ENCODE measurements at regions of chr11 and their contacts with region 1.

Region 1: GRCh38 chr11:8006349-8006977 is 19.3 kb downstream of the EIF3F start:
- DNase-seq: peak; percentile 82
- H3K4me3 ChIP-seq: no peak overlapping the region
- H3K27ac ChIP-seq: no peak overlapping the region
- H3K4me1 ChIP-seq: no peaks in the 10 kb centered on the region
- H3K27me3 ChIP-seq: no peaks in the 10 kb centered on the region
- CTCF ChIP-seq: peak; percentile 73 to 89 (median 83)
- EP300 ChIP-seq: no peak
- POLR2A ChIP-seq: no peak

Region 2: GRCh38 chr11:7840580-7840979 is 165.9 kb before region 1 on chr11:
- intact Hi-C with region 1: no loop called
- DNase-seq: no peak
- H3K4me3 ChIP-seq: no peak overlapping the region
- H3K27ac ChIP-seq: no peak overlapping the region
- H3K4me1 ChIP-seq: no peaks in the 10 kb centered on the region
- H3K27me3 ChIP-seq: no peaks in the 10 kb centered on the region
- CTCF ChIP-seq: no peak
- EP300 ChIP-seq: no peak
- POLR2A ChIP-seq: no peak

Region 3: DNA sequence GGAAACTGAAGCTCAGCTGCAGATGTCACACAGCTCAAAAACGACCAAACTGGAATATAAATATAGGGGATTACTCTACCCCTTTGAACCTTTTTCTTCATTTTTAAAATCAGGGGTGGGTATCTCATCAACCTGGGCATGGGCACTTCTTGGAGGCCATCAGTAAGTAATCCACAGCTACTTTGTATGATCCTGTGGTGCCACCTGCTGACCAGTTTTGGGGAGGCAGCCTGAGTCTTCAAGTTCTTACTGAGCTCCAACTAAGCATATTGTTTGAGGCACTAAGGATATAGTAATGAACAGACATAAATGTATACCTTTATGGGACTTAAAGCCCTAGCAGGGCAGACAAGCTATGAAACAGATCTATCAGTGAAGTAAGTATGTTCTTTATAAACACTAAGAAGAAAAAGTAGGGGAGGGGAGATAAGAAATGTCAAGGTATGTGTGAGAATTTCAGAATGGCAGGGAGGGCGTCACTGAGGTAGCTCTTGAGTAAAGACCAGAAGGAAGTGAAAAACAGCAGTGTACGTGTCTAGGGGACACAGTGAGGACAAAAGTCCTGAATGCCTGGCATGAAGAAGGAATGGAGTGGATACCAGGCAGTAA is 92.9 kb after region 1 on chr11:
- intact Hi-C with region 1: loop called (anchors 10 kb)
- DNase-seq: peak; percentile 92
- H3K4me3 ChIP-seq: no peak overlapping the region
- H3K27ac ChIP-seq: no peak overlapping the region
- H3K4me1 ChIP-seq: no peaks in the 10 kb centered on the region
- H3K27me3 ChIP-seq: no peaks in the 10 kb centered on the region
- CTCF ChIP-seq: peak; percentile 74 to 82 (median 79)
- EP300 ChIP-seq: no peak
- POLR2A ChIP-seq: no peak

Region 4: GRCh38 chr11:8263769-8264410 is 257.4 kb after region 1 on chr11 and contains the start of gene LMO1:
- intact Hi-C with region 1: loop called (anchors 10 kb)
- DNase-seq: no peak
- H3K4me3 ChIP-seq: peak within 1 kb of the TSS; percentile 61 to 72 (median 64)
- H3K27ac ChIP-seq: peak within 1 kb of the TSS in 3 of 4 donors; percentile 27 to 60 (median 45)
- H3K4me1 ChIP-seq: peaks cover 19 to 42% (median 40%) of the 10 kb centered on the region in 4 donors
- H3K27me3 ChIP-seq: peaks cover 0 to 69% (median 23%) of the 10 kb centered on the region in 4 donors
- CTCF ChIP-seq: peak; percentile 70 to 91 (median 84)
- EP300 ChIP-seq: no peak
- POLR2A ChIP-seq: no peak
- total RNA-seq, gene LMO1: 0.50 TPM in 1 of 4 donors, not detected in the others